ENCODE measurements at regions of chr1 and their contacts with region 1.

Region 1: DNA sequence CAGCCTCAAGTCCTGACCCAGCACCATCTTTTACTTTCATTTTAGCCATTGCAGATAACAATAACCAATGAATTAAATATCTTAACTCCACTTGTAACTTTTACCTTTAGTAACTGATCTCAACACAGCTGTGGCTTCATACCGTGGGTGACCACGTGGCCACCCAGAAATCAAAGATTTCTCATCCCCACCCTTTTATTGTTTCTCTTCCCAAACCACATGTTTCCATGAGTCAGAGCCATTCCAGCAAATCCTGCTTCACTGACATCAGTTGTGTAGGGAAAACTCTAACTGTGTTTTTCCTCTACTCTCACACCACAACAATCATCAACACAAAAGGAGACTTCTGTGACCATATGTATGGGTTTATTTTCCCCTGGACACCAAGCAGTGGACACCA is 25.1 kb upstream of the BRDT start:
- DNase-seq: no peak
- ATAC-seq: no peak
- H3K4me3 Mint-ChIP-seq: no peak overlapping the region
- H3K27ac Mint-ChIP-seq: no peak overlapping the region
- H3K4me1 Mint-ChIP-seq: no peaks in the 10 kb centered on the region
- H3K27me3 Mint-ChIP-seq: peaks cover 2% of the 10 kb centered on the region
- CTCF ChIP-seq: no peak

Region 2: GRCh38 chr1:90579212-90579802 is 1344.8 kb before region 1 on chr1:
- CTCF ChIA-PET with region 1: no interaction called
- POLR2A ChIA-PET with region 1: no interaction called
- intact Hi-C with region 1: loop called (anchors 1 kb)
- DNase-seq: no peak
- ATAC-seq: no peak
- H3K4me3 Mint-ChIP-seq: no peak overlapping the region
- H3K27ac Mint-ChIP-seq: no peak overlapping the region
- H3K4me1 Mint-ChIP-seq: no peaks in the 10 kb centered on the region
- H3K27me3 Mint-ChIP-seq: peaks cover 6% of the 10 kb centered on the region
- CTCF ChIP-seq: peak; percentile 58

Region 3: GRCh38 chr1:91440845-91441244 is 483.3 kb before region 1 on chr1:
- CTCF ChIA-PET with region 1: no interaction called
- POLR2A ChIA-PET with region 1: no interaction called
- intact Hi-C with region 1: loop called (anchors 1 kb)
- DNase-seq: no peak
- ATAC-seq: no peak
- H3K4me3 Mint-ChIP-seq: no peak overlapping the region
- H3K27ac Mint-ChIP-seq: no peak overlapping the region
- H3K4me1 Mint-ChIP-seq: no peaks in the 10 kb centered on the region
- H3K27me3 Mint-ChIP-seq: peaks cover 15% of the 10 kb centered on the region
- CTCF ChIP-seq: no peak

Region 4: GRCh38 chr1:91511386-91511785 is 412.8 kb before region 1 on chr1:
- CTCF ChIA-PET with region 1: interaction called, 13 read pairs
- POLR2A ChIA-PET with region 1: no interaction called
- intact Hi-C with region 1: loop called (anchors 1 kb)
- DNase-seq: no peak
- ATAC-seq: no peak
- H3K4me3 Mint-ChIP-seq: no peak overlapping the region
- H3K27ac Mint-ChIP-seq: no peak overlapping the region
- H3K4me1 Mint-ChIP-seq: no peaks in the 10 kb centered on the region
- H3K27me3 Mint-ChIP-seq: no peaks in the 10 kb centered on the region
- CTCF ChIP-seq: no peak